Activated CD8-positive, alpha-beta T cell treated with anti-CD3 and anti-CD28 coated beads for 36 hours (primary cell): ENCODE measurements at regions of chr1 and their contacts with region 1.

Region 1: DNA sequence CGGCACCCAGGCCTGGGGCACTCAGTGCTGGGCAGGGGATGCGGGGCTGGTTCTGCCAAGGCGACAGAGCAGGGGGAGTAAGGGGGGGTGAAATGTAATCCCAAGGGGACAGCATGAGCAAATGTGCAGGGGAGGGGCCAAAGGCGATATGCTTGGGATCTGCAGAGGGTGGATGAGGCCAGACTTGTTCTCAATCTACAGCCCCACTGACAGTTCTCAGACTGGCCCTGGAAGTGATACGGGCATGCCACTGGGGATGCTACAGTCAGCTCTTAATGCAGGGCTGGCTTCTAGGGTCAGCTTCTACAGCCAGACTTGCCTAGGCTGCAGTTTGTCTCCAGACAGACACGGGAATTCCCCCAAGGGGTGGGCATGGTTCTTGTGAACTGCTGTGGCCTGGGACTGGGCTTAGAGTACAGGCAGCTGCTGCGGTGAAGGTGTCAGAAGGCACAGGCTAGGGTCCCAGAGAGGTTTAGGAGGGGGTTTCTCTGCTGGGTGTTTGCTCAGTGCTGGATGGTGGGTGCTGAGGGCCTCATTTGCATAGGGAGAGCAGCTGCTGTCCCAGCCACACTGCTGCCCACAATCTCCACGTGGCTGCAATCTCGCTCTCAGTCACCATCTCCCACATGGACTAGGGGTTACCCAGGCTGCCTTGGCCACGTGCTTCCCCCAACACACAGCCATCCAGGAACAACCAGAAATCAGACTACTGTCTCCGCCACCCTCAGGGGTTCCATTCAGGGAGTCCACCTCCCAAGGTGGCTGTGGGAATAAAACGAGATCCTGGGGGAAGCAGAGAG is 190.1 kb downstream of the HIVEP3 start:
- DNase-seq: peak; percentile 94
- ATAC-seq: peak; percentile 91
- H3K4me3 Mint-ChIP-seq: no peak overlapping the region
- H3K27ac Mint-ChIP-seq: peak overlapping the region; percentile 85
- H3K4me1 Mint-ChIP-seq: peaks cover 41% of the 10 kb centered on the region
- H3K27me3 Mint-ChIP-seq: no peaks in the 10 kb centered on the region
- CTCF ChIP-seq: no peak

Region 2: DNA sequence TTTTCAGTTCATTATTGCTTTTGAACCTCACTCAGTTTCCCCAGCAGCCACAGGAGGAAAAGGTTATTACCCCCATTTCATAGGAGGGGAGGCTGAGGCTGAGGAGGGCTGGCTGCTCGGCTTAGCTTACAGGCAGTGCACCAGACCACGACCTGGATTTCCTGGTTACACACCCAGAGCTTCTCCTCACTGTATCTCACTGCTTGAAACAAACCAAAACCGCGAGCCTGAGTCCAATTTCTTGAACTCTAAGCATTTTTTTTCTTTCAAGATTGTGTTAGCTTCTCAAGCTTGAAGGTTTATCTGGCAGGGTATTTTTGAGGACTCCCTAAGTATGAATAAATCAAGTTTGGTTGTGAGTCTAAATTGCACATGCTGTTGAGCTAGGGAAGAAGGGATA is 55.2 kb before region 1 on chr1:
- CTCF ChIA-PET with region 1: no interaction called
- POLR2A ChIA-PET with region 1: interaction called, 4 read pairs
- intact Hi-C with region 1: loop called (anchors 5 kb)
- DNase-seq: peak; percentile 75
- ATAC-seq: peak; percentile 65
- H3K4me3 Mint-ChIP-seq: peak overlapping the region; percentile 37
- H3K27ac Mint-ChIP-seq: peak overlapping the region; percentile 83
- H3K4me1 Mint-ChIP-seq: peaks cover 80% of the 10 kb centered on the region
- H3K27me3 Mint-ChIP-seq: no peaks in the 10 kb centered on the region
- CTCF ChIP-seq: no peak

Region 3: GRCh38 chr1:41716188-41717130 is 12.1 kb before region 1 on chr1:
- CTCF ChIA-PET with region 1: no interaction called
- POLR2A ChIA-PET with region 1: no interaction called
- intact Hi-C with region 1: no loop called
- DNase-seq: no peak
- ATAC-seq: no peak
- H3K4me3 Mint-ChIP-seq: no peak overlapping the region
- H3K27ac Mint-ChIP-seq: no peak overlapping the region
- H3K4me1 Mint-ChIP-seq: peaks cover 20% of the 10 kb centered on the region
- H3K27me3 Mint-ChIP-seq: no peaks in the 10 kb centered on the region
- CTCF ChIP-seq: no peak

Region 4: GRCh38 chr1:41739061-41739955 is 10.7 kb after region 1 on chr1:
- CTCF ChIA-PET with region 1: interaction called, 4 read pairs
- POLR2A ChIA-PET with region 1: interaction called, 23 read pairs
- intact Hi-C with region 1: no loop called
- DNase-seq: peak; percentile 95
- ATAC-seq: peak; percentile 47
- H3K4me3 Mint-ChIP-seq: peak overlapping the region; percentile 67
- H3K27ac Mint-ChIP-seq: peak overlapping the region; percentile 95
- H3K4me1 Mint-ChIP-seq: peaks cover 92% of the 10 kb centered on the region
- H3K27me3 Mint-ChIP-seq: no peaks in the 10 kb centered on the region
- CTCF ChIP-seq: no peak